Vagina (tissue), 2 donors: ENCODE measurements at regions of chr10 and their contacts with region 1.

Region 1: DNA sequence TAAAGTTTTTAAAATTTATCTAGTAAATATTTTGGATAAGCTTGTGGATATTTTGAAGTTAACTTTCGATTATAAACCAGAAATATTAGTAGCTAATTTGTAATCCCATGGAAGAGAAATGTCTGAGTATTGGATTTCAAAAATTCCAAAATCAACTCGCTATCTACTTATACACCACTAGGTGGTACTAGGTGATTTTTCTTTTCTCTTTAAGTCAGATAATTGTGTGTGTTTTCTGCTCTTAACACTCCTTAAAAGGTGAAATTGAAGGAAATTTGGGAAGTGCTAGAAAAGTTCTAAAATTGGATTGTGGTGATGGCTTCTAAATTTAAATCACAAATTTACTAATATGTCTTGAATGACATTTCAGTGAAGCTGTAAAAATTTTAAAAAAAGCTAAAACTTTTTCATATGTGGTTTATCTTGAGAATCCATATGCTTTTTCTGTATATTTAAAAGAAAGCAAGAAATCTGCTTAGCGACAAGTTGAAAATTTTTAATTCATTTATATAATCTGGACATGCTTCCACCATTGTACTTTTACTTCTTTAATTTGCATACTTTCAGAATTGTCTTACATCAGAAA is 90.2 kb downstream of the IPMK start:
- DNase-seq: no peak
- H3K4me3 ChIP-seq: no peak overlapping the region
- H3K27ac ChIP-seq: no peak overlapping the region
- H3K4me1 ChIP-seq: no peaks in the 10 kb centered on the region
- H3K27me3 ChIP-seq: no peaks in the 10 kb centered on the region
- CTCF ChIP-seq: peak; percentile 8 to 57 (median 34)
- POLR2A ChIP-seq: no peak

Region 2: DNA sequence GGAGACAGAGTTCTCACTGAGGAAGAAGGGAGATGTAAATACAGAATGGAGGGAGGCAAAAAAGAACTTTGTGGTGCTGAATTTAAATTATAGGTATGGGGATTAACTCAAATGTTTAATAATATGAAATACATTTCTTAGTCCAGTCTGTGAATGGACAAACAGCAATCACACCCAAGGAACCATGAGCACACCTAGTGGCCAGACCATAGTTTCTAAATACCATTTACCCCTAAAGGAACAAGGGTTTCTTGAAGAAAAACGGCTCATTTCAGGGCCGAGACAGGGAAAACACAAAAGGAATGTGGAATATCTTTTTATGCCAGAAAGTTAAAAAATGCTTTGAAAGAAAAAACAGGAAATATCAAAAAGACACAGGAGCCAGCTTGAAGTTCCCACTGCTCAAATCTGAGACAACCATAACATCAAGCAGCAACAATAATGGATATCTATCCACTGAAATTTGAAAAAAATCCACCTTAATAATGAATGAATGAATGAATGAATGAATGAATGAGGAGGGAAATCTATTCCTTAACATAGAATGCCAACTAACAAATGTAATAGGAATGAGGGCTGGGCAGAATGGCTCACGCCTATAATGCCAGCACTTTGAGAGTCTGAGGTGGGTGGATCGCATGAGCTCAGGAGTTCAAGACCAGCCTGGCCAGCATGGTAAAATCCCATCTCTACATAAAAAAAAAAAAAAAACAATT is 81.7 kb after region 1 on chr10:
- intact Hi-C with region 1: no loop called
- DNase-seq: no peak
- H3K4me3 ChIP-seq: no peak overlapping the region
- H3K27ac ChIP-seq: no peak overlapping the region
- H3K4me1 ChIP-seq: no peaks in the 10 kb centered on the region
- H3K27me3 ChIP-seq: no peaks in the 10 kb centered on the region
- CTCF ChIP-seq: no peak
- POLR2A ChIP-seq: no peak

Region 3: DNA sequence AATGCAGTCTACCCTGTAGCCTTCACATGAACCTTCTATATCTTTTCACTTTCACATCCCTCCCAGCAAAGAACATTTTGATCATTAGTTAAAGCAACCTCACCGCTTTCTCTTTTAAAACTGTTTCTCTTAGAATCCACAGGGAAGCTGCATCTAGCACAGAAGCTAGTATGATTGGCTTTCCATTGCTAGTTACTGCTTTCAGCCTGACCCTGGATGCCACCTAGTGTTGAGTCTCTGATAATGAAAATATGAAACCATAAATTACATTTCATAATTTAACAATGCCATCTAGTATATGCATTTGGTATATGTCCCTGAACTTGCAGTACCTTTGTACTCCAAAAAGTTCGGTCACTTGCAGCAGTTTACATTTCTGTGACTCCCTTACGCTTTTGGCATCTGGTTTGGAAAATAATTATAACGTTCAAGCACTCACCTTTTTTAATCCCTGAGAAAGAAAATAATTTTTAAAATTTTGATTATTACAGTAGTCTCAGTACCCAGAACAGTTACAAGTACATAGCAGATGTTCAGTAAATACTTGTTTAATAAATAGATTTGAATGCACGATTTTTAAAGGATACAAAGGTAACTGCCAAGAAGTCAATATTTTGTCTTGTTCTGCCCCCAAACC is 114.2 kb after region 1 on chr10:
- intact Hi-C with region 1: loop called (anchors 5 kb)
- DNase-seq: no peak
- H3K4me3 ChIP-seq: no peak overlapping the region
- H3K27ac ChIP-seq: no peak overlapping the region
- H3K4me1 ChIP-seq: no peaks in the 10 kb centered on the region
- H3K27me3 ChIP-seq: no peaks in the 10 kb centered on the region
- CTCF ChIP-seq: peak; percentile 48 to 67 (median 60)
- POLR2A ChIP-seq: no peak

Region 4: DNA sequence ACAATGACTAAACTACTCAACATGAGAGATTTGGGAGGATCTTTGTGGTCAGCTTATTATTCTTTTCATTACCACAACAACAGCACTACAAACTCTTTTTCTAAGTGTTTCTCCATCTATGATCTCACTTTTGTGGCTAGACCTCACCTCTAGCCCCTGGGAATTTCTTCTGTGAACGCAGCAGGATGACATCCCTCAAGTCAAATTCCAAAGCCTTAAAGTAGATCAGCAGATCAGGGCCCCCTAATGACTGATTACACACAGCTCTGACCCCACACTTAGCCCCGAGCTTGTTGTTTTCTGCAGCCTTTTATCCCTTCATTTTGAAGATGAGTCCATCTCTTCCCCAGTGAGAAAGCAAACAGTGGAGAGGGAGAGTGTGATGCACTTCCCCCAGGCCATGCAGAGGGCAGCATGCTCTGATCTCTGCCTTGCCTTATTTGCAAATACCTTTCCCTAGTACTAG is 235.1 kb after region 1 on chr10:
- intact Hi-C with region 1: no loop called
- DNase-seq: no peak
- H3K4me3 ChIP-seq: no peak overlapping the region
- H3K27ac ChIP-seq: no peak overlapping the region
- H3K4me1 ChIP-seq: no peaks in the 10 kb centered on the region
- H3K27me3 ChIP-seq: no peaks in the 10 kb centered on the region
- CTCF ChIP-seq: no peak
- POLR2A ChIP-seq: no peak